SK-N-SH (cell line): ENCODE measurements at regions of chr7 and their contacts with region 1.

Region 1: DNA sequence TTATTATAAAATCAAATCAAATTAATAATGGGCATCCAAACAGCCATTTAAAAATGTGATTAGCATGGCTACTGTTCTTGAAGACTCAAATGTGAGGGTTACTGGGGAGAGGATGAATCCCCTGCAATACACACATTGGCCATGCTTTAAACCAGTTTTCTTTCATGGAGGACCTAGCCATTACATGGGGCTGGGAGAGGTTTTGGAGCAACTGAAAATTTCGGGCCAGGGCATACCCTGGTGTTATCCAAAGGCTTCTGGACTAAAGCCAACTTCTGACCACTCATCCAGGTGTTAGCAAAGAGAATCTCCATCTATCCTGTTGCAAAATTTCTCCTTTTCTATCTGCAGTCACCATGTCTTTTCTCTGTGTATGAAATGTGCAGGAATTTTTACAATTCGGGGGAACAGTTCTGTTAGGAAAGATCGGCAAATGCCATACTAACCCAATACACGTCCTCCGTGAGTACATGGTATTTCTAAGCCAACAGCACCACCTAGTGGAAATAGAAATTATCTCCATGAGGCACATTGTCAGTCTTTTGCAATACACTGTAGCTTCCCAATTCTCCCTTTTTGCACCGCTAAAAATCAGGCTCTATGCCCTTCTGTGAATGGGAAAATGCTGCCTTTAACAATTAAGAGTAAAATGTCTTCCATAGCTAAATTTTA is 47.0 kb upstream of the ZNF107 start:
- DNase-seq: peak; percentile 53
- H3K4me3 ChIP-seq: no peak overlapping the region
- H3K27ac ChIP-seq: no peak overlapping the region
- H3K4me1 ChIP-seq: no peaks in the 10 kb centered on the region
- H3K27me3 ChIP-seq: no peaks in the 10 kb centered on the region
- CTCF ChIP-seq: peak; percentile 79
- EP300 ChIP-seq: no peak
- RAD21 ChIP-seq: peak; percentile 94

Region 2: GRCh38 chr7:64183126-64183742 is 435.7 kb before region 1 on chr7:
- CTCF ChIA-PET with region 1: interaction called, 178 read pairs
- POLR2A ChIA-PET with region 1: no interaction called
- DNase-seq: peak; percentile 82
- H3K4me3 ChIP-seq: peak overlapping the region; percentile 36 to 44; a peak in 2 of 4 replicates
- H3K27ac ChIP-seq: no peak overlapping the region
- H3K4me1 ChIP-seq: peaks cover 0 to 6% of the 10 kb centered on the region in 2 experiments; a peak in 1 of 4 replicates
- H3K27me3 ChIP-seq: no peaks in the 10 kb centered on the region
- CTCF ChIP-seq: peak; percentile 85
- EP300 ChIP-seq: no peak
- RAD21 ChIP-seq: peak; percentile 71